Natural killer cell (primary cell): ENCODE measurements at regions of chr9 and their contacts with region 1.

Region 1: DNA sequence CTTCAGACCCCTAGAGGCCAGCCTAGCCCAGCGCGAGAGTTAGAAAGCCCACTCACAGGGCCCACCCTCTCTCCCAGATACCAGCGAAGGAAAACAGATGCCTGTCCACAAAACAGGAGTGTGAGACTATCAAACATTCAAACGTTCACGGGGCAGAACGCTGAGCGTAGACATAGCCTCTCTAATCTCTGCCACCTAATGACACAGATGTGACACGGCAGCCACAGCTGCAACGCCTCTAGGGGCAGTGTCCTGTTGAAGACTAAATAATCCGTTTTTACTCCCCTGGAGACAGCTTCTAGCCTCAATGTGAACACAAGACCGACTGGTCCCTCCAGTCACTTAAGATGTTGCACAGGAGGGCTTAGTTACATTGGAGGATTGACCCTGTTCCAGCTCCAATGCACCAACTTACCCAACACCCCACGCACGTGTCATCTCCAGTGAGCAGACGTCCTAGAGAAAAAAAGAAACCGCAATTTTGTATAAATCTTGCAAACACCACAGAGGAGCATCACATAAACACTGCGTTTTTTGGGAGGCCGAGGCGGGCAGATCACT is 14.3 kb downstream of the DIPK1B start:
- DNase-seq: peak in 1 of 2 donors; percentile 74
- ATAC-seq: peak; percentile 26 to 58 (median 58)
- H3K4me3 ChIP-seq: peak overlapping the region; percentile 67
- H3K4me3 Mint-ChIP-seq: peak overlapping the region; percentile 94
- H3K27ac ChIP-seq: no peak overlapping the region
- H3K27ac Mint-ChIP-seq: peak overlapping the region; percentile 81 to 89
- H3K4me1 ChIP-seq: peaks cover 34% of the 10 kb centered on the region
- H3K4me1 Mint-ChIP-seq: peaks cover 21 to 29% of the 10 kb centered on the region in 2 donors
- H3K27me3 ChIP-seq: no peaks in the 10 kb centered on the region
- H3K27me3 Mint-ChIP-seq: no peaks in the 10 kb centered on the region
- CTCF ChIP-seq: peak; percentile 52

Region 2: GRCh38 chr9:136700959-136701667 is 25.6 kb before region 1 on chr9:
- intact Hi-C with region 1: loop called (anchors 2 kb)
- DNase-seq: peak; percentile 60 to 76
- ATAC-seq: peak; percentile 79 to 91 (median 80)
- H3K4me3 ChIP-seq: peak overlapping the region; percentile 4
- H3K4me3 Mint-ChIP-seq: peak overlapping the region; percentile 59
- H3K27ac ChIP-seq: no peak overlapping the region
- H3K27ac Mint-ChIP-seq: peak overlapping the region; percentile 67 to 89
- H3K4me1 ChIP-seq: peaks cover 32% of the 10 kb centered on the region
- H3K4me1 Mint-ChIP-seq: peaks cover 8 to 12% of the 10 kb centered on the region in 2 donors
- H3K27me3 ChIP-seq: peaks cover 7% of the 10 kb centered on the region
- H3K27me3 Mint-ChIP-seq: peaks cover 19% of the 10 kb centered on the region in 2 donors
- CTCF ChIP-seq: no peak